Activated CD4-positive, alpha-beta T cell treated with anti-CD3 and anti-CD28 coated beads for 36 hours (primary cell): ENCODE measurements at regions of chr17 and their contacts with region 1.

Region 1: DNA sequence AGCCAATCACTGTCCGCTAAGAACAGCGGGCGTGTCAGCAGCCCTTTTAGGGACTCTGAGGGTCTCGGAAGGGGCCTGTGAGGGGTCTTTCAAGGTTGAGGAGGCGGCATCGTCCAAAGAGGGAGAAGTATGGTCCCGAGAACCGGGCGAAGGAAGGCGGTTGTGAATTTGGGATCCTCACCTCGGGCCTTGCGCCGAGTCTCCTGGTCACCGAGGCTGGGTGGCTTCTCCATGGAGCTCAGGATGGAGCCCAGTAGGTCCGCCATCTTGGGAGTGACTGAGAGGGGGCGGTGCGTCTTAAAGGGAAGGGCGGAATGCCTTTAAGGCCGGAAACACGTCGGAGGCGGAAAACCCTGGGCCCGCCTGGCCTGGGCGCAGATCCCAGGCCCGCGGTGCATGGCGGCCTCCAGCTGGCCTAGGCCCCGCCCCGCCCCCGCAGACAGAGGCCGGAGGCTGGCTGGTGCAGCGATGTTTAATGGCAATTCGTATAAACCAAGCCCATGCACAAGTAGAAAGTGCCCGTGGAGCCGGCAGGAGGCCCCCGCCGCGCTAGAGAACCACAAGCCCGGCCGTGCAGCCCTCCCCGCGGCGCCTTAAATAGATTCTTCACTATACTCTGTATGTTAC is at the start of gene SPAG7:
- DNase-seq: peak; percentile 96
- ATAC-seq: peak; percentile 54
- H3K4me3 Mint-ChIP-seq: no peak within 1 kb of the TSS
- H3K27ac Mint-ChIP-seq: no peak within 1 kb of the TSS
- H3K4me1 Mint-ChIP-seq: peaks cover 40% of the 10 kb centered on the region
- H3K27me3 Mint-ChIP-seq: no peaks in the 10 kb centered on the region
- total RNA-seq, gene SPAG7: 61.4 to 69.4 TPM

Region 2: GRCh38 chr17:4903051-4903818 is 64.4 kb before region 1 on chr17 and contains the start of gene CHRNE:
- CTCF ChIA-PET with region 1: interaction called, 3 read pairs
- POLR2A ChIA-PET with region 1: no interaction called
- intact Hi-C with region 1: loop called (anchors 1 to 2 kb)
- DNase-seq: peak; percentile 89
- ATAC-seq: peak; percentile 44
- H3K4me3 Mint-ChIP-seq: peak within 1 kb of the TSS; percentile 65
- H3K27ac Mint-ChIP-seq: peak within 1 kb of the TSS; percentile 72
- H3K4me1 Mint-ChIP-seq: peaks cover 26% of the 10 kb centered on the region
- H3K27me3 Mint-ChIP-seq: no peaks in the 10 kb centered on the region
- total RNA-seq, gene CHRNE: 0.59 to 0.84 TPM

Region 3: DNA sequence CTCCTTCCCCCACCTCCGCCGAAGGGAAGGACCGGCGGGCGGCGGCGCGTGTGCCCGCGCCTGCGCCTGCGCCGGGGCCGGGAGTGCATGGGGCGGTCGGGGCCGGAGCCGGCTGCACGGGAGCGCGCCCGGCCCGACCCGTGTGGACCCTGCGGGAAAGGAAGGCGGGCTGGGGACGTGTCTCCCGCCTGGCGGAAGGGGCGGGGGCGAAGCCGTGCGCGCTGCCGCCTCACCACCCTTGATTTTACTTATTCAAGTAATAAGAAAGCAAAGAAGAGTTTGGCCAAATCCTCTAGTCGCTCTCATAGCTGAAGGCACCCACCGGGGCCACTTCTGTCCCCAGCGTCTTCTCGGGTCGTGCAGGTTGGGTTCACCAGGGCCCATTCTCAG is 18.7 kb before region 1 on chr17:
- CTCF ChIA-PET with region 1: interaction called, 6 read pairs
- POLR2A ChIA-PET with region 1: interaction called, 80 read pairs
- intact Hi-C with region 1: loop called (anchors 1 kb)
- DNase-seq: peak; percentile 88
- ATAC-seq: peak; percentile 39
- H3K4me3 Mint-ChIP-seq: peak overlapping the region; percentile 99
- H3K27ac Mint-ChIP-seq: peak overlapping the region; percentile 100
- H3K4me1 Mint-ChIP-seq: peaks cover 34% of the 10 kb centered on the region
- H3K27me3 Mint-ChIP-seq: no peaks in the 10 kb centered on the region

Region 4: GRCh38 chr17:4986951-4987766 is 19.5 kb after region 1 on chr17 and contains the start of gene CAMTA2:
- CTCF ChIA-PET with region 1: interaction called, 3 read pairs
- POLR2A ChIA-PET with region 1: interaction called, 3 read pairs
- intact Hi-C with region 1: loop called in 1 of 2 experiments (anchors 1 kb)
- DNase-seq: peak; percentile 91
- ATAC-seq: peak; percentile 87
- H3K4me3 Mint-ChIP-seq: peak within 1 kb of the TSS; percentile 93
- H3K27ac Mint-ChIP-seq: peak within 1 kb of the TSS; percentile 91
- H3K4me1 Mint-ChIP-seq: peaks cover 33% of the 10 kb centered on the region
- H3K27me3 Mint-ChIP-seq: no peaks in the 10 kb centered on the region
- total RNA-seq, gene CAMTA2: 98.2 to 124 TPM

Region 5: DNA sequence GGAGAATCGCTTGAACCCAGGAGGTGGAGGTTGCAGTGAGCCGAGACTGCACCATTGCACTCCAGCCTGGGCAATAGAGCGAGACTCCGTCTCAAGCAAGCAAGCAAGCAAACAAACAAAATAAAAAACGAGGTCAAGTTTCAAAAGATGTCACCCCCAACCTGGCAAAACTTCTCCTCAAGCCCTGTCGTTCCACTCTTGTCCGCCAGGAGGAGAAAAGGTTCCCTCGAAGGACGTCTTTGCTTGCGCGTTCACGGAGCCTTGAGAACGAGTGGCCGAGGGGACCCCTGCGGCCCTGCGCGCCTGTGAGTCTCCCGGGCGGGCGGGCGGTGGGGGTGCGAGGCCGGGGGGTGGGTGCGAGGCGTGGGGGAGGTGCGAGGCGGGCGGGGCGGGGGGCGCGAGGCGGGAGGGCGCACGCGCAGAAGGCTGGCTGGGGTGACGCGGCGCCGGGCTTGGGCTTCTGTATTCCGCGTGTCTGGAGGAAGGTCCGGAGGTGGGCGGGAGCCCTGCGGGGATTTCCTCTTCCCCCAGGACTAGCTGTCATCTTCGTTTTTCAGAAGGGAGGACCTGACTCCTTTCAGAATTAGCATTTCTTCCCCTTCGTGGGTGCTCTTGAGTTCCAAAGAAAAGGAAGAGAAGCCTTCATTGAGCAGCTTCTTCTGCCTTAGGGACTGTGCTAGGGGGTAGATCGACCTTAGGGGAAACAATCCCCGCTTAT is 63.9 kb after region 1 on chr17:
- CTCF ChIA-PET with region 1: interaction called, 4 read pairs
- POLR2A ChIA-PET with region 1: no interaction called
- intact Hi-C with region 1: loop called (anchors 1 to 5 kb)
- DNase-seq: peak; percentile 91
- ATAC-seq: peak; percentile 82
- H3K4me3 Mint-ChIP-seq: peak overlapping the region; percentile 68
- H3K27ac Mint-ChIP-seq: peak overlapping the region; percentile 85
- H3K4me1 Mint-ChIP-seq: peaks cover 19% of the 10 kb centered on the region
- H3K27me3 Mint-ChIP-seq: peaks cover 3% of the 10 kb centered on the region

Region 6: DNA sequence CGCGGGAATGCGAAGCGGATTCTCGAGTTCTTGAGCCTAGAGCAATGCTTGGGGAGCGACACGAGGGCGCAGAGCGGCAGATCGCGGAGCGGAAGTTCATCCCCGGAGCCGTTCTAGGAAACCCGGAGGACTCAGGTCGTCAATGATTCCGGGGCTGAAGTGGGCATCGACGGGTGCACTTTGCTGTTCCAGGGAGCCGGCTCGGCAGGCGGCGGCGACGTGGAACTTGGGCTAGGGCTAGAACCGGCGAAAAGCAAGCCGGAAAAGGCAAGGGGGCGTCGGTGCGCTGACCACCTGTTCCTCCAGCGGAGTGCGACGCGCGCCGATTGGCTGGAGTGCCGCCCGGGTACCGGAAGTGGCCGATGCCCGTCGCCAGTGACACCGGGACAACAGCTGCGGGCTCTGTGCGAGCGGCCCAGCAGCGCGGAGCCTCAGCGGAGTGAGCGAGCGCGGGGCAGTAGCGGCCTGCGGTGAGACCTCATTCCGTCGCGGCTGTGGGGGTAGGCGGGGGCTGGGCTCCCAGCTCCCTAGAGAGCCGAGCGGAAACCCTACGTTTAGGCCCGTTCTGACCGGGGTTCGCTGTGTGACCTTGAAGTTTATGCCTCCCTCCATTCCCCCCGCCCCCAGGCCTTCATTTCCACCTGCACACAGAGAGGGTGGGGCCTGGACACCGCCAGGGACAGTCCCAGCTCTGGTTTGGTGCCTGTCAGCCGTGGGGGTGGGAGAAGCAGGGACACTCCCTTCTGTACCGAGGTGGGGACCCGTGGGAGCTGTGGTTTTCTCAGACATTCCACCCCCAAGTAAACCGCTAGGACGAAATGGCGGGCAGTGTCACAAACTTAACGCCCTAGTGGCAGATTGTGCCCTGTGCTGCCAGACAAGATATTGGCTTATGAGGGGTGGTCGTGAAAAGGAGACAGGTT is 110.7 kb after region 1 on chr17 and contains the start of gene ZFP3:
- CTCF ChIA-PET with region 1: no interaction called
- POLR2A ChIA-PET with region 1: no interaction called
- intact Hi-C with region 1: loop called in 1 of 2 experiments (anchors 5 kb)
- DNase-seq: peak; percentile 89
- ATAC-seq: peak; percentile 90
- H3K4me3 Mint-ChIP-seq: peak within 1 kb of the TSS; percentile 73
- H3K27ac Mint-ChIP-seq: peak within 1 kb of the TSS; percentile 95
- H3K4me1 Mint-ChIP-seq: peaks cover 30% of the 10 kb centered on the region
- H3K27me3 Mint-ChIP-seq: no peaks in the 10 kb centered on the region
- total RNA-seq, gene ZFP3: 2.2 to 2.8 TPM

Region 7: GRCh38 chr17:5123343-5124124 is 155.9 kb after region 1 on chr17:
- CTCF ChIA-PET with region 1: no interaction called
- POLR2A ChIA-PET with region 1: no interaction called
- intact Hi-C with region 1: no loop called
- DNase-seq: peak; percentile 5
- ATAC-seq: no peak
- H3K4me3 Mint-ChIP-seq: no peak overlapping the region
- H3K27ac Mint-ChIP-seq: no peak overlapping the region
- H3K4me1 Mint-ChIP-seq: no peaks in the 10 kb centered on the region
- H3K27me3 Mint-ChIP-seq: peaks cover 36% of the 10 kb centered on the region